ENCODE measurements at regions of chr22 and their contacts with region 1.

Region 1: DNA sequence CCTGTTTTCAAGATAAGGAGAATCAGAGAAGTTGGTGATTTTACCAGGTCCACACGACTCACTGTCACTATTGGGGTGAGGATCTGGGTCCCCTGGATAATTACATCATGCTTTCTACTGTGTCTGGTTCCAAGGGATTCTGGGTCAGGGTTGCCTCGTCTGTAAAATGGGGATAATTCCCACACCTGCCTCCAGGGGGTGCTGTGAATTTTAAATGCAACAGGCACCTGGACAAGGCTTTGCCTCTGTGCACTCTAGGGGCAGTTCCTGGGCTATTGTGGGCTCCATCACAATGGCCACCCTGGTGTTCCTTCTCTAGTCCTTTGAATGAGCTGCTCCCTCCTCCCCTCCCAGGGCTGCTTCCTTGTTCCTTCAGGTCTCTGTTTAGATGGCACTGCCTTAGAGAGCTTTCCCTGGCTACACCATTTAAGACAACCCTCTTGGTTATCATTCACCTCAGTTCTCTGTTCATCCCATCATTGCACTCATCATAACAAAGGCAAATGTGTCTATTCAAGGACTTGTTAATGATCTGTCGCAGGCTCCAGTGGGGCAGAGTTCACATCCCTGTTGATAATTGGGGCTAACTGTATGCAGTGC is 178.6 kb downstream of the MIAT start:
- DNase-seq: peak; percentile 78 to 94
- H3K4me3 ChIP-seq: no peak overlapping the region
- H3K27ac ChIP-seq: no peak overlapping the region
- H3K4me1 ChIP-seq: peaks cover 2 to 8% (median 5%) of the 10 kb centered on the region in 4 experiments; a peak in 5 of 7 replicates
- H3K27me3 ChIP-seq: no peaks in the 10 kb centered on the region; a peak in 2 of 7 replicates
- CTCF ChIP-seq: peak; percentile 66 to 89 (median 88)
- EP300 ChIP-seq: no peak
- POLR2A ChIP-seq: no peak
- RAD21 ChIP-seq: peak; percentile 78 to 86

Region 2: DNA sequence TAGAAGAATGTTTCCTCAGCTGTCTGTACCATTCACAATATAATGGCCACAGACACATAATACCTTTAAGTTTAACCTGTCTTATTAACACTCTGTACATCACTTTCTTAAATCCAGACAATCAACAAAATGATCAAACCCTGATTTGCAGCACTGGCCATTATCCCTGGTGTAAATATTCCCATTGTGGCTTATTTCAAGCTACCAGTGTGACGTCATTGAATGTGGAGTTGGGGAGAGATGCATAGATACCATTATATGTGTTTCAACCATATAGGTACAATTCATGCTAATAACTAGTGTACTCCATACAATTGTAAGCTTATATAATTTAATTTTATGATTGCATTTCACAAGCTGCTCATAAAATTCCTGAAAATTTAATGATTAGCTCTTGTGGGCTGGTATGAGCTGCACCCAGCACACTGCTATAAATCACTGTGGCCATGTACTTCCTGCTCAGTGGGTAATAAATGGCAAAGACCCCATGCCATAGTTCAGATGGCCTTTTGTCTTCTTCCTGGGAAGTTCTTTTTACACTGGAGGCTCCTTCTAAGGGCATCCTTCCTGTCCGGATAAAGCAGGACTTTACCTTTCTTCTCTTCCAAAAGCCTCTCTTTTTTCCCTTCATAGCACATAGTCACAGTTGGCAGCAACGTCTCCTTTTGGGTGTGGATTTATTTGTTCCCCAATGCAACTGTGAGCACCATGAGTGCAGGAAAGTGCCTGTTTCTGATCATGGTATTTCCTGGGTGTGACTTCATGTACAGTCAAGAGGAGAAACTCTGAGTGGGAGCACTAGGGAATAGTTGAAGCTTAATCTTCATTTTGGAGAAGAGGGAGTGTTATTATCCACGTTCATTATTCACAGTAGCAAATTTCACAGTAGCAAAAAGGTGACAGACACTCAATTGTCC is 90.9 kb before region 1 on chr22:
- CTCF ChIA-PET with region 1: no interaction called
- POLR2A ChIA-PET with region 1: no interaction called
- DNase-seq: no peak
- H3K4me3 ChIP-seq: no peak overlapping the region
- H3K27ac ChIP-seq: no peak overlapping the region
- H3K4me1 ChIP-seq: peaks cover 0 to 9% (median 4%) of the 10 kb centered on the region in 4 experiments; a peak in 4 of 7 replicates
- H3K27me3 ChIP-seq: no peaks in the 10 kb centered on the region; a peak in 1 of 7 replicates
- CTCF ChIP-seq: no peak
- EP300 ChIP-seq: no peak
- POLR2A ChIP-seq: no peak
- RAD21 ChIP-seq: no peak

Region 3: GRCh38 chr22:26822299-26822698 is 13.7 kb before region 1 on chr22:
- CTCF ChIA-PET with region 1: interaction called, 16 read pairs
- POLR2A ChIA-PET with region 1: no interaction called
- DNase-seq: no peak
- H3K4me3 ChIP-seq: no peak overlapping the region
- H3K27ac ChIP-seq: no peak overlapping the region
- H3K4me1 ChIP-seq: no peaks in the 10 kb centered on the region; a peak in 1 of 7 replicates
- H3K27me3 ChIP-seq: 0 out of 7 replicates have a peak, but pooled peaks cover 0 to 2% (median 0%) of the 10 kb centered on the region in 4 experiments
- CTCF ChIP-seq: no peak
- EP300 ChIP-seq: no peak
- POLR2A ChIP-seq: no peak
- RAD21 ChIP-seq: 0 out of 4 replicates have a peak, but pooled peaks of 1 of the 2 experiments have one; percentile 15

Region 4: DNA sequence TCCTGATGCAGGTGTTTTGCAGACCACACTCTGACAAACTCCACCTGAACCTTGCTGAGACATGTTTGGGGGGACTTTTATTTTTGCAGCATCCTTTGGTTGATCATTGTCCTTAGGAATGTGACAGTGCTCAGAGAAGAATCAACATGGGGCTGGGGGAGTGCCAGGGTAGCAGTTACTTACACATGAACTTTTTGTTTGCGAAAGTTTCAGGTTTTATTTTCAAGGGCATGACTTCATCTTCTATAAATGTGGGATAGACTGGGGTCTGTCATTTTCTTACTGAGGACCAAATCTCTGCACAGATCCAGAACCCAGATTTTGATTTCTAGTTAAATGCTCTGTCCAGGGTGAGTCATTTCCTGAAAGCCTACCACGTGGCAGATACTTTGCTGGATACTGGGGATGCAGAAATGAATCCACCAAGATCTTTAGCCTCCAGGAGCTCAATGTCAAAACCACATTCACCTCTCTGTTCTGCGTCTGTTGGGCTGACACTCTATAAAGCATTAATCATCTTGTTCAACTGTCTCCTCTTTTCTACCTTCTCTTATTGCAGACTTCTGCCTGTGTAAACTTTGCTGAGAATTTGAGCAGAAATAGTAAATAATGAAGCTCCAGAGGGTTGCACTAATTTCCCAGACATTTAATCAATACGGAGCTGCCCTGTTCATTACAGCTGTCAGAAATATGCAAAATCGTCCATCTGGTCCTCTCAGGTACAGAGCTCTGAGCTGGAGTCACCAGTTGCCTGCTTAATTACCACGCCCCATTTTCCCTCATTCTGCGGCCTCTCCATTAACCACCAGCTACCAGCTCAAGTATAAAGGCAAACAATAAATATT is 209.3 kb after region 1 on chr22:
- CTCF ChIA-PET with region 1: no interaction called
- POLR2A ChIA-PET with region 1: no interaction called
- DNase-seq: no peak
- H3K4me3 ChIP-seq: no peak overlapping the region
- H3K27ac ChIP-seq: no peak overlapping the region
- H3K4me1 ChIP-seq: no peaks in the 10 kb centered on the region; a peak in 1 of 7 replicates
- H3K27me3 ChIP-seq: no peaks in the 10 kb centered on the region
- CTCF ChIP-seq: no peak
- EP300 ChIP-seq: no peak
- POLR2A ChIP-seq: no peak
- RAD21 ChIP-seq: no peak

Measured in H1 (cell line).